HepG2 (cell line): ENCODE measurements at regions of chr4 and their contacts with region 1.

Region 1: DNA sequence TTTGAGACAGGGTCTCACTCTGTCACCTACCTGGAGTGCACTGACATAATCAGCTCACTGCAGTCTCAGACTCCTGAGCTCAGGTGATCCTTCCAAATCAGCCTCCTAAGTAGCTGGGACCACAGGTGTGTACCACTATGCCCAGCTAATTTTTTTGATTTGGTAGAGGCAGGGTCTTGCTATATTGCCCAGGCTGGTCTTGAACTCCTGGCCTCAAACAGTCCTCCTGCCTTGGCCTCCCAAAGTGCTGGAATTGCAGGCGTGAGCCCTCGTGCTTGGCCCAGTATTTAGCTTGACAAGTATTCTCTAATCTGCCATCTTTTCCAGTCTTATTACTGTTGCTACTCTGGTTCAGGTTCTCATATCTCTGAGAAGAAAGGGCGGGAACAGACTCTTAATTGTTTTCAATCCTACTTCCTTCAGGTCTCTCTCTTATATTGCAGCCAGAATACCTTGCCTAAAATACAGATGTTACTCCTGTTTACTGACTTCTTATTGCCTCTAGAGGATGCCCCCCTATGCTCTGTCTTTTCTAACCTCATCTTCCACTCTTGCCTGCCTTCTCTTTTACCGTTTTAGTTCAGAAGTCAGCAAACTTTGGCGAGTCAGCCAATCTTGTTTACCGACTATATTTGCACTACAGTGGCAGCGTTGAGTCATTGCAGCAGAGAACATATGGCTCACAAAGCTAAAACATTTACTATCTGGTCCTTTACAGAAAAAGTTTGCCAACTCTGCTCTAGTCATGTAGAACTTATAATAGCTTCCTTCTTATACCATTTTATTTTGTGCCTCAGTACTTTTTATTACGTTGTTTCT is 19.0 kb downstream of the MRPL1 start:
- DNase-seq: peak; percentile 80
- ATAC-seq: peak; percentile 99
- H3K4me3 ChIP-seq: no peak overlapping the region; a peak in 1 of 6 replicates
- H3K27ac ChIP-seq: peak overlapping the region; percentile 47
- H3K4me1 ChIP-seq: peaks cover 33% of the 10 kb centered on the region
- H3K27me3 ChIP-seq: no peaks in the 10 kb centered on the region
- CTCF ChIP-seq: peak; percentile 24; the same call in 1 of the 2 replicates
- EP300 ChIP-seq: peak in 1 of 2 experiments; percentile 33; a peak in 1 of 4 replicates
- POLR2A ChIP-seq: no peak
- RAD21 ChIP-seq: no peak

Region 2: GRCh38 chr4:77819843-77820648 is 61.6 kb before region 1 on chr4:
- CTCF ChIA-PET with region 1: no interaction called
- POLR2A ChIA-PET with region 1: no interaction called
- in situ Hi-C with region 1: no loop called
- intact Hi-C with region 1: loop called (anchors 5 kb)
- DNase-seq: peak; percentile 52
- ATAC-seq: peak; percentile 69
- H3K4me3 ChIP-seq: peak overlapping the region; percentile 94 to 100 (median 99)
- H3K27ac ChIP-seq: peak overlapping the region; percentile 92
- H3K4me1 ChIP-seq: peaks cover 28% of the 10 kb centered on the region
- H3K27me3 ChIP-seq: no peaks in the 10 kb centered on the region; a peak in 1 of 5 replicates
- CTCF ChIP-seq: peak; percentile 22
- EP300 ChIP-seq: no peak
- POLR2A ChIP-seq: peak; percentile 70 to 83
- RAD21 ChIP-seq: peak; percentile 48; the same call in 1 of the 2 replicates